ENCODE measurements at regions of chr12 and their contacts with region 1.

Region 1: GRCh38 chr12:71780237-71780822 is 25.7 kb downstream of the RAB21 start:
- DNase-seq: peak; percentile 28
- CTCF ChIP-seq: peak; percentile 52

Region 2: GRCh38 chr12:71760471-71760870 is 19.9 kb before region 1 on chr12:
- CTCF ChIA-PET with region 1: interaction called, 13 read pairs
- POLR2A ChIA-PET with region 1: no interaction called
- DNase-seq: no peak
- CTCF ChIP-seq: no peak

Region 3: DNA sequence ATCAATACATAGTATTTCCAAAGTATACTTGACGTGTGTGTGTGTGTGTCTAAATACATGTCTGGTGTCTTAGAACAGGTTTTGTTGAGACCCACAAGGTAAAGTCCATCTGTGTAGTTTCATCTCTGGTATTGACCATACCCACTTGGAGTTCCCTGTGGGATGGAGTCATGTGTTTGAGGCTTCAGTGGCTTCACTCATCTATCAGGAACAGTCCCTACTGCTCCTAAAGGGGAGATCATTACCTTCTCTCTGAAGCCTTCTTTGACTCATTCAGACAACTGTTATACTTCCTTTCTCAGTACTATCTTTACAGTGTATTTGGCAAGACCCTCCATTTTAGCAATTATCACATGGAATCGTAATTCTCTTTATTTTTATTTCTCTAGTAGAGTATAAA is 11.4 kb before region 1 on chr12:
- CTCF ChIA-PET with region 1: interaction called, 20 read pairs
- POLR2A ChIA-PET with region 1: no interaction called
- DNase-seq: no peak
- CTCF ChIP-seq: no peak

Region 4: DNA sequence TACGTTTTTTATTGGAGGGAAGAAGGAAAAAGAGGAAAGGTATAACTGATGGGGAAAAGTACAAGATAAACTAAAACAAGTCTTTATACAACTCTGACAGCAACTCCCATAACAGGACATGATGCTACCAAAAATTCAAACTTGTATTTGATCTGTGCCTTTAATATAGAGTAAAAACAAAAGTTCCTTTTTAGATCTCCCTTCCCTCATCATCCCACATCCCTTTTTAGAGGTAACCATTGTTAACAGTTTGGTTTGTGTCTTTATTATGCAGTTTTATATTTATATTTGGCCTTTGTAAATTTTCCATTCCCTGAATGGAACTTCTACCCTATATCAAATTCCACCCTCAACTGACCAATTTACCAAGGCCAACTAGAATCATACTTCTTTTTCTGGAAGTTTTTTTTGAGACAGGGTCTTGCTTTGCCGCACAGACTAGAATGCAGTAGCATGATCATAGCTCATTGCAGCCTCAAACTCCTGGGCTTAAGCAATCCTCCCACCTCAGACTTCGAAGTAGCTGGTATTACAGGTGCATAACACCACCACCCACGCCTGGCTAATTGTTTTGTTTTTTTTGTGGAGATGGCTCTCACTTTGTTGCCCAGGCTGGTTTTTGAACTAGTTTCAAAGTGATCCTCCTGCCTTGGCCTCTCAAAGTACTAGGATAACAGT is 11.3 kb after region 1 on chr12:
- CTCF ChIA-PET with region 1: interaction called, 13 read pairs
- POLR2A ChIA-PET with region 1: no interaction called
- DNase-seq: no peak
- CTCF ChIP-seq: no peak

Region 5: GRCh38 chr12:71797531-71797930 is 17.2 kb after region 1 on chr12:
- CTCF ChIA-PET with region 1: interaction called, 13 read pairs
- POLR2A ChIA-PET with region 1: no interaction called
- DNase-seq: no peak
- CTCF ChIP-seq: no peak